ENCODE measurements at regions of chr2 and their contacts with region 1.

Region 1: GRCh38 chr2:191677646-191678436 is at the start of gene NABP1:
- DNase-seq: peak; percentile 98 to 99 (median 99)
- H3K4me3 ChIP-seq: peak within 1 kb of the TSS; percentile 83 to 97 (median 92)
- H3K4me3 Mint-ChIP-seq: peak within 1 kb of the TSS; percentile 92 to 98
- H3K27ac ChIP-seq: peak within 1 kb of the TSS; percentile 93 to 99
- H3K27ac Mint-ChIP-seq: peak within 1 kb of the TSS; percentile 99 to 100 (median 100)
- H3K4me1 ChIP-seq: peaks cover 57 to 74% of the 10 kb centered on the region in 2 donors
- H3K4me1 Mint-ChIP-seq: peaks cover 60% of the 10 kb centered on the region
- H3K27me3 ChIP-seq: no peaks in the 10 kb centered on the region
- H3K27me3 Mint-ChIP-seq: peaks cover 0 to 5% (median 0%) of the 10 kb centered on the region in 3 donors
- CTCF ChIP-seq: no peak
- polyA plus RNA-seq, gene NABP1: 8.0 to 20.7 (median 13.3) TPM

Region 2: DNA sequence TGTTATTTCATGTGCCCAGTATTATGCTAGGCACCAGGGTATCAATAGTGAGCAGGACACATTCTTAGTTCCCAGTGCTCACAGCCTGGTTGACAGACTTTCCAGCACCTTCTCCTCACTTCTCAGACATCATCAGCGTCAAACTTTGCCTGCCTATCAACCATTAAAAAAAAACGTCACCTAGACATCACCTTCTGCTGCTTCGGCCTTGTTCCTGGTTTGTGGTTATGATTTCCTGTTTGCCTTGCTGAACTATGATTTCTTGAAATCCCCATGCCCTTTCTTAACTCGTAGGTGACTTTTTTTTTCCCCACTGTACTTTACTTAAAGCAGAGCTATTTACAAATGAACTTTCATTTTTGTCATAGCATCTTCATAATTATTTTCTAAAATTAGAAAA is 60.3 kb before region 1 on chr2:
- intact Hi-C with region 1: loop called in 1 of 2 experiments (anchors 5 kb)
- DNase-seq: peak; percentile 48 to 86 (median 69)
- H3K4me3 ChIP-seq: peak overlapping the region in 1 of 3 experiments; percentile 16
- H3K4me3 Mint-ChIP-seq: peak overlapping the region in 1 of 2 donors; percentile 27
- H3K27ac ChIP-seq: peak overlapping the region in 1 of 2 donors; percentile 61
- H3K27ac Mint-ChIP-seq: peak overlapping the region; percentile 73 to 91 (median 84)
- H3K4me1 ChIP-seq: peaks cover 30 to 42% of the 10 kb centered on the region in 2 donors
- H3K4me1 Mint-ChIP-seq: peaks cover 36% of the 10 kb centered on the region
- H3K27me3 ChIP-seq: no peaks in the 10 kb centered on the region
- H3K27me3 Mint-ChIP-seq: peaks cover 0 to 2% (median 0%) of the 10 kb centered on the region in 3 donors
- CTCF ChIP-seq: no peak

Region 3: GRCh38 chr2:191637182-191638078 is 40.4 kb before region 1 on chr2:
- intact Hi-C with region 1: loop called in 1 of 2 experiments (anchors 5 kb)
- DNase-seq: peak; percentile 63 to 81 (median 71)
- H3K4me3 ChIP-seq: peak overlapping the region in 2 of 3 experiments; percentile 11 to 48
- H3K4me3 Mint-ChIP-seq: peak overlapping the region; percentile 34 to 72
- H3K27ac ChIP-seq: peak overlapping the region; percentile 67 to 84
- H3K27ac Mint-ChIP-seq: peak overlapping the region; percentile 87 to 96 (median 93)
- H3K4me1 ChIP-seq: peaks cover 24 to 27% of the 10 kb centered on the region in 2 donors
- H3K4me1 Mint-ChIP-seq: peaks cover 27% of the 10 kb centered on the region
- H3K27me3 ChIP-seq: no peaks in the 10 kb centered on the region
- H3K27me3 Mint-ChIP-seq: no peaks in the 10 kb centered on the region
- CTCF ChIP-seq: no peak